Mammary epithelial cell (primary cell): ENCODE measurements at regions of chr1 and their contacts with region 1.

Region 1: GRCh38 chr1:107648071-107648470 is 316.9 kb downstream of the VAV3 start:
- DNase-seq: peak; percentile 87
- H3K4me3 ChIP-seq: no peak overlapping the region
- H3K27ac ChIP-seq: peak overlapping the region; percentile 80
- H3K4me1 ChIP-seq: peaks cover 31% of the 10 kb centered on the region
- H3K27me3 ChIP-seq: no peaks in the 10 kb centered on the region
- CTCF ChIP-seq: no peak

Region 2: DNA sequence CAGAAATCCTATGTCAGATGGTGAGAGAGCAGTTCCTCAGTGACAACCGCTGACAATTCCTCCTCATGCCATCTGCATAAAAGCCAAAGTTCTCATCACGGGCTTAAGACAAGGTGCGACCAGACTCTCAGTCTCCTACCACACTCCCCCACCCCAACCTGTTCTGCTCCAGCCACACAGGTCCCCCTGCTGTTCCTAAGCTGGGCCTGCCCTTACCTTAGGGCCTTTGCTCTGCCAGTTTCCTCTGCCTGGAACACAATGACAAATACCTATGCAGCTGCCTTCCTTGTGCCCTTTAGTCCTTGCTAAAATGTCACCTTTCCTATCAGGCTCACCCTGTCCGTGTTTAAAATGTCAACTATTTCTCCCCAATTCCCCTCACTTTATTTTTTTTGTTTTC is 125.0 kb before region 1 on chr1:
- CTCF ChIA-PET with region 1: no interaction called
- dilution Hi-C with region 1: no loop called
- in situ Hi-C with region 1: no loop called
- intact Hi-C with region 1: no loop called
- DNase-seq: no peak
- H3K4me3 ChIP-seq: no peak overlapping the region
- H3K27ac ChIP-seq: no peak overlapping the region
- H3K4me1 ChIP-seq: peaks cover 11% of the 10 kb centered on the region
- H3K27me3 ChIP-seq: no peaks in the 10 kb centered on the region
- CTCF ChIP-seq: no peak

Region 3: GRCh38 chr1:107683191-107683657 is 35.2 kb after region 1 on chr1:
- CTCF ChIA-PET with region 1: no interaction called
- dilution Hi-C with region 1: no loop called
- in situ Hi-C with region 1: no loop called
- intact Hi-C with region 1: loop called (anchors 5 kb)
- DNase-seq: peak; percentile 60
- H3K4me3 ChIP-seq: no peak overlapping the region
- H3K27ac ChIP-seq: peak overlapping the region; percentile 55
- H3K4me1 ChIP-seq: peaks cover 16% of the 10 kb centered on the region
- H3K27me3 ChIP-seq: no peaks in the 10 kb centered on the region
- CTCF ChIP-seq: no peak

Region 4: DNA sequence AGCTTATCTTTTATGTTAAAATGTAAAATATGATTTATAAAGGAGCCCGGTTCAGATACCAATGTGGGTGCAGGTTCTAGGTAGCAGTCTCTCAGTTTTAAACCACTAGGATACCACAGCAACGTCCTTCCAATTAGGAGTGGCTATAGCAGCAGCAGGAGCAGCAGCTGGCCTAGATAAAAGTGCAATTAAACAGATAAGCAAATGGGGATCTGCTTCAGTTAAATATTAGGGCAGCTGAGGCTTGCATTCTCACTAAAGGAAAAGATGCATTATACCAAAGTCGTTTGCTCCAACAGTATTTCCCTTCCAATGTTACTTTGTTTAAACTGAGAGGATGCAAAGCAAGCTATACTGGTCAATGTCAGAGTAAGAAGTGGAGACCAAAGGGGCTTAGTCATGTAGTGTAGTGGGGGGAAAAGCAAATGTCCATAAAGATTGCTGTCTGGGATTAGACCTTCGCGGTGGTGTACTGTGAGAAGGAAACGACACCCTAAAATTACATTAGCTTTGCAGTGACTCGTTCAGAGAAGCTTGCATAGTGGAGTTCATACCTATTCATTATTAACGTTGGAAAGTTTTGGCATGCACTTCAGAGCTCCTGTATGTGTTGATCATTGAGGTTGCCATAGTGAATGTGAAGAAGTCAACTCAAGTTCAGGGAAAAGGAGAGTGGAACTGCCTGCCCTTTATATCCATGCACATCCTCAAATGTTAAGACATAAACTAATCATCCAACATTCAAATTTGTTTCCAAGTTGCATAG is 44.7 kb after region 1 on chr1:
- CTCF ChIA-PET with region 1: no interaction called
- dilution Hi-C with region 1: loop called (anchors 5 kb)
- in situ Hi-C with region 1: no loop called
- intact Hi-C with region 1: no loop called
- DNase-seq: peak; percentile 43
- H3K4me3 ChIP-seq: no peak overlapping the region
- H3K27ac ChIP-seq: no peak overlapping the region
- H3K4me1 ChIP-seq: peaks cover 50% of the 10 kb centered on the region
- H3K27me3 ChIP-seq: no peaks in the 10 kb centered on the region
- CTCF ChIP-seq: no peak

Region 5: GRCh38 chr1:107782217-107782845 is 134.3 kb after region 1 on chr1:
- CTCF ChIA-PET with region 1: no interaction called
- dilution Hi-C with region 1: no loop called
- in situ Hi-C with region 1: no loop called
- intact Hi-C with region 1: no loop called
- DNase-seq: peak; percentile 26
- H3K4me3 ChIP-seq: no peak overlapping the region
- H3K27ac ChIP-seq: no peak overlapping the region
- H3K4me1 ChIP-seq: no peaks in the 10 kb centered on the region
- H3K27me3 ChIP-seq: no peaks in the 10 kb centered on the region
- CTCF ChIP-seq: peak; percentile 46 to 55